ENCODE measurements at regions of chr14 and their contacts with region 1.

Region 1: GRCh38 chr14:59507063-59507780 is 22.9 kb downstream of the JKAMP start:
- DNase-seq: peak; percentile 26
- H3K4me3 ChIP-seq: no peak overlapping the region
- H3K27ac ChIP-seq: no peak overlapping the region
- H3K27me3 ChIP-seq: no peaks in the 10 kb centered on the region
- CTCF ChIP-seq: peak; percentile 99

Region 2: DNA sequence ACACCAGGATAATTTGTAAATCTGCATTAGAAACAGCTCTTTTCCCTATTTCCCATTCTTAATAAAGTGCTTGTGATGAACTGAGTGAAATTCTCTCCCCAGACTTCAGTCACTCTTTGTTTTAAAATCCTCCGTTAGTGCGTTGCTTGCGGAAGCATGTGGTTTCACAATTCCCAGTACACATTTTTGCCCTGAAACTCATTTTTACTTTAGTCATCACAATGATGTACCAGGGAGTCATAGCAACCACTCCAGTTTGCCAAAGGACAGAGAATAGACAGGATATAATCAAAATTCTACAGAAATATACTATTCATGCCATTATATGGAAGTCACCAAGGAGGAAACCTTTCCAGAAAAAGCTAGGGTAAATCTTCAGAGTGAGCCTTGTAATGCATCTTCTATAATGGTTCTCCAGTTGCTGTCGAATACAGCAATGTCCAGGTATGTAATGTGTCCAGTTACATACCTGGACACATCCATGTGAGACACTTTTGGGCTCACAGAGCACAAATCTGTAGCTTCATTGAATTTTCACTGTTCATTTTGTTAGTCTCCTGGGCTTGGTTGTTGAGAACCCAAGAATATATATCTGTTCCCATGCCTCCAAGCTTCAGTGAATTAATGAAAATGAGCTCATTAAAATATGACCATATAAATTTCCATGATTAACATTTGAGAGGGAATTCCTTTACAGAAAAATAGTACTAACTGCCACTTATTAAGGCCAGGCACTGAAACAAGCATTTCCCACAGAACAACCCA is 99.8 kb before region 1 on chr14:
- CTCF ChIA-PET with region 1: no interaction called
- POLR2A ChIA-PET with region 1: no interaction called
- DNase-seq: peak; percentile 78
- H3K4me3 ChIP-seq: peak overlapping the region; percentile 23; the same call in 1 of the 2 replicates
- H3K27ac ChIP-seq: peak overlapping the region; percentile 83
- H3K27me3 ChIP-seq: no peaks in the 10 kb centered on the region
- CTCF ChIP-seq: no peak

Region 3: DNA sequence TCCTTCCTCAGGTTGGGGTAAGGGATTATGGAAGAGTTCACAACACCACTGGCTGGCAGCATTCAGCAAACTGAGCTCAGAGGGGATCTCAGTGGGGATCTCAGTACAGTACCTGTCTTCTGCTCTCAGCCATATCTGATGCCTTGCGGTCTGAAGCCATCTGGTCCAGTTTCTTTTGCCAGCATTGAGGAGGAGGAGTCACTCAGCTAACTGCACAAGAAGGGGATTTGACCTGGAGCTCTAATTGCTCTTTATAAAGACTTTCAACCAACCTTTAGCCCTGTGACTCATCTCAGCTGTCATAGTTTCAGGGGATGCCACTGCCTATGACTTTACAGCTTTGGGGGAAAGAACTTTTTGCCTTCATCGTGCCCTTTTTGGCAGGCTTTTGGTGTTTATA is 22.0 kb after region 1 on chr14:
- CTCF ChIA-PET with region 1: interaction called, 14 read pairs
- POLR2A ChIA-PET with region 1: no interaction called
- DNase-seq: no peak
- H3K4me3 ChIP-seq: no peak overlapping the region
- H3K27ac ChIP-seq: no peak overlapping the region
- H3K27me3 ChIP-seq: no peaks in the 10 kb centered on the region
- CTCF ChIP-seq: no peak

Region 4: DNA sequence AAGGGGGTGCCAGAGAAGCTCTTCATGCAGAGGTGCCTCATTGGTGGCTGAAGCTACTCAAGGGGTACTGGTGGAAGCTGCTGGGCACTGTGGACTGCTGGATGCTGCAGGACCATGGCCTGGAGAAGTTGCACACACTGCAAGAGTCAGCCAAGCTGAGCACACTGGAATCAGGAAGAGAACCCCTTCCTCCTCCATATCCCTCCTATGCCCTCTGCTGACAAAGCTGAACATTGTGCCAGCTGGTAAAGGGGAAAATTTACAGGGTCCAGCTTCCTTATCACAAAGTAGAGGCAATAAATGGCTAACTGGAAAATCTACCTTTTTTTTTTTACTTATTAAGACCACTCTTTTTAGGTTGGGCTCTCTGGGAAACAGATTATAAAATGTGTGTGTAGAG is 62.9 kb after region 1 on chr14:
- CTCF ChIA-PET with region 1: interaction called, 169 read pairs
- POLR2A ChIA-PET with region 1: no interaction called
- DNase-seq: no peak
- H3K4me3 ChIP-seq: no peak overlapping the region
- H3K27ac ChIP-seq: no peak overlapping the region
- H3K27me3 ChIP-seq: peaks cover 13% of the 10 kb centered on the region
- CTCF ChIP-seq: peak; percentile 32

Region 5: GRCh38 chr14:59688224-59689170 is 181.3 kb after region 1 on chr14:
- CTCF ChIA-PET with region 1: interaction called, 26 read pairs
- POLR2A ChIA-PET with region 1: no interaction called
- DNase-seq: peak; percentile 20
- H3K4me3 ChIP-seq: no peak overlapping the region
- H3K27ac ChIP-seq: no peak overlapping the region
- H3K27me3 ChIP-seq: peaks cover 3% of the 10 kb centered on the region
- CTCF ChIP-seq: peak; percentile 90